WTC11 (cell line): ENCODE measurements at regions of chr21 and their contacts with region 1.

Region 1: DNA sequence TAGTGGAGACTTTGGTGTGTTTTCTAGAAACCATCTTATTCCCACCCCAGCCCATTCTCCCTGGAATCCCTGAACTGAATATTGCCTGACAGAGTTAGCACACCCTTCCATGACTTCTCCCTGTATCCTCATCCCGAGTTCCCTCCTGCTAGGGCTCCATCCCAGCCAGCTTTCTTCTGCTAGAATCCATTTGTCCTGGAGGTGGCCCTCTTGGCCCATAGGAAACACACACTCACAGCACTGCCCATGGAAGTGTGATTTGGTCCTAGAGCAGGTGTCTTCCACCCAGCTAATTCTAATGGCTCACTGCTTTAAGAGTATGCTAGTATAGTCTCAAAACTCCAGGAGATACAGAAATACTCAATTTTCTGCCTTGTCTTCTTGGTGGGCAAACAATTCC is 4.1 kb downstream of the KRTAP15-1 start:
- DNase-seq: peak; percentile 31
- ATAC-seq: peak; percentile 95
- H3K4me3 Mint-ChIP-seq: no peak overlapping the region
- H3K27ac Mint-ChIP-seq: no peak overlapping the region
- H3K4me1 Mint-ChIP-seq: peaks cover 29% of the 10 kb centered on the region
- H3K27me3 Mint-ChIP-seq: no peaks in the 10 kb centered on the region
- CTCF ChIP-seq: no peak

Region 2: DNA sequence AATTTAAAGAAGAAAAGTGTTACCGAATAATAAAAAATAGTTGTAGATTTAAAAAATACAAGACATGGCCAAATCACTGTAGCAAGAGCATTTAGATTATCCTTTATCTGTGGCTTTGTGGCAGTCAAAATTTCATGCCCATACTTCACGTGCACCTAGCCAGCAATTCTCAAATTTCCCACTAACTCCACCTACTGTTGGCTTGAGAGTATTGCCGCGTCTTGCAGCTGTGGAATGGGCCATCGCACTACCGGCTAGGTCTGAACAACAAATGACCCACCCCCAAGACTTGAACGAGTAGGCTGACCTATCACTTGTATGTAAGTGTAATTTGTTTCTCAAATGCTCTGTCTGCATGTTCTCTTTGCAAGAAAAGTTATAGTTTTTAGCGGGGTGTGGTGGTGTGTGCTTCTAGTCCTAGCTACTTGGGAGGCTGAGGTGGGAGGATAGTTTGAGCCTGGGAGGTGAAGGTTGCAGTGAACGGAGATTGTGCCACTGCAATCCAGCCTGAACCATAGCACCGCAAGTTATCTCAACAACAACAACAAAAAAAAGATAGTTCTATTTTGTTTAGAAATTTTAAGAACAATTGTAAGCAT is 10.1 kb before region 1 on chr21:
- CTCF ChIA-PET with region 1: interaction called, 16 read pairs
- POLR2A ChIA-PET with region 1: no interaction called
- DNase-seq: peak; percentile 64
- ATAC-seq: peak; percentile 98
- H3K4me3 Mint-ChIP-seq: no peak overlapping the region
- H3K27ac Mint-ChIP-seq: no peak overlapping the region
- H3K4me1 Mint-ChIP-seq: peaks cover 14% of the 10 kb centered on the region
- H3K27me3 Mint-ChIP-seq: no peaks in the 10 kb centered on the region
- CTCF ChIP-seq: peak; percentile 36; the same call in 1 of the 2 replicates

Region 3: GRCh38 chr21:30463713-30464112 is 19.5 kb after region 1 on chr21:
- CTCF ChIA-PET with region 1: interaction called, 19 read pairs
- POLR2A ChIA-PET with region 1: no interaction called
- DNase-seq: no peak
- ATAC-seq: peak; percentile 38; the same call in 1 of the 2 replicates
- H3K4me3 Mint-ChIP-seq: no peak overlapping the region
- H3K27ac Mint-ChIP-seq: no peak overlapping the region
- H3K4me1 Mint-ChIP-seq: no peaks in the 10 kb centered on the region
- H3K27me3 Mint-ChIP-seq: no peaks in the 10 kb centered on the region
- CTCF ChIP-seq: peak; percentile 66

Region 4: DNA sequence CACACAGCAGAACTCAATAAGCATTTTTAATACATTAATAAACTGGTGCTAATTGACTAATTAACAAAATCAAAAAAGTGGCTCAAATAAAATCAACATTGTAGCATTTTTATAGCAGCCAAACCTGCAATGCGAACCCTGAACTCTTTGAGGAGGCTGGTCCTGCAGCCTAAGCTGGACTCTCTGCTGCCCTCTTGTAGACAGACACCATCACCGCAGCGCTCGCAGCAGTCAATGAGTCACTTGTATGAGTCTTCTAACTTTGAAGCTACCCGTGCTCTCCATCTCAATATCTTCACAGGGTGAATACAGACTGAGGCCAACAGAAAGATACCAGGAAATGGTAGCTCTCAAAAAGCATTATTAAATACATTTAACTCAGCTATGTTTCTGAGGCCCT is 395.1 kb after region 1 on chr21:
- CTCF ChIA-PET with region 1: interaction called, 11 read pairs
- POLR2A ChIA-PET with region 1: no interaction called
- DNase-seq: peak; percentile 73
- ATAC-seq: peak; percentile 98
- H3K4me3 Mint-ChIP-seq: no peak overlapping the region
- H3K27ac Mint-ChIP-seq: no peak overlapping the region
- H3K4me1 Mint-ChIP-seq: no peaks in the 10 kb centered on the region
- H3K27me3 Mint-ChIP-seq: no peaks in the 10 kb centered on the region
- CTCF ChIP-seq: peak; percentile 44; the same call in 1 of the 2 replicates